Dorsolateral prefrontal cortex (tissue), 120 donors: ENCODE measurements at regions of chr13 and their contacts with region 1.

Region 1: GRCh38 chr13:20713751-20714150 is 10.3 kb downstream of the IL17D start:
- DNase-seq: peak in 3 of 10 donors; percentile 40 to 75 (median 59)
- H3K4me3 ChIP-seq: peak overlapping the region in 34 of 59 donors; percentile 0 to 62 (median 30)
- H3K27ac ChIP-seq: peak overlapping the region in 57 of 59 donors; percentile 8 to 89 (median 75)
- H3K27me3 ChIP-seq: no peaks in the 10 kb centered on the region
- CTCF ChIP-seq: peak in 8 of 56 donors; percentile 7 to 16 (median 10)

Region 2: DNA sequence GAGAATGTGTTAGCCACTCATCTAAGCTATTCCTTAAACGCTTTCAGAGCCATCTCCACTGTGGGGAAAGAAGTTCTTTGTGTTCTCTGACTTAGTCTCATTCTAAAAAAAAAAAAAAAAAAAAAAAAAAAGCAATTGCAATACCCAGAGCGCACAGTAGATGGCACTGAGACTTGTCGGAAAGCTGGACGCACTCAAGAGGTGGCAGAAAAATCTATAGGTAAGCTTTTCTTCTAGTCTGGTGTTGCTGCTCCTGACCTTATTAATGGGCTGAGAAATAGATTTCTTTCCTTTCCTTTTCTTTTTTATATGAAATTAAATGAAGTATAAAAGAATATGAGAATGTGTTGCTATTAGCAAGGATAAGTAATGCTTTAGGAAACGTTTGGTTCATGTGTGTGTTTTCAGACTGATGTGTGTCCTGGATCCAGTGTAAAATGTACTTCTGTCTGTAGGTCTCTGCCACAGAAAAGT is 516.4 kb before region 1 on chr13:
- intact Hi-C with region 1: loop called in 1 of 2 experiments (anchors 10 kb)
- DNase-seq: no peak
- H3K4me3 ChIP-seq: peak overlapping the region in 15 of 59 donors; percentile 4 to 38 (median 16)
- H3K27ac ChIP-seq: no peak overlapping the region
- H3K27me3 ChIP-seq: peaks cover 0 to 48% (median 38%) of the 10 kb centered on the region in 45 donors
- CTCF ChIP-seq: peak; percentile 54 to 86 (median 75)

Region 3: DNA sequence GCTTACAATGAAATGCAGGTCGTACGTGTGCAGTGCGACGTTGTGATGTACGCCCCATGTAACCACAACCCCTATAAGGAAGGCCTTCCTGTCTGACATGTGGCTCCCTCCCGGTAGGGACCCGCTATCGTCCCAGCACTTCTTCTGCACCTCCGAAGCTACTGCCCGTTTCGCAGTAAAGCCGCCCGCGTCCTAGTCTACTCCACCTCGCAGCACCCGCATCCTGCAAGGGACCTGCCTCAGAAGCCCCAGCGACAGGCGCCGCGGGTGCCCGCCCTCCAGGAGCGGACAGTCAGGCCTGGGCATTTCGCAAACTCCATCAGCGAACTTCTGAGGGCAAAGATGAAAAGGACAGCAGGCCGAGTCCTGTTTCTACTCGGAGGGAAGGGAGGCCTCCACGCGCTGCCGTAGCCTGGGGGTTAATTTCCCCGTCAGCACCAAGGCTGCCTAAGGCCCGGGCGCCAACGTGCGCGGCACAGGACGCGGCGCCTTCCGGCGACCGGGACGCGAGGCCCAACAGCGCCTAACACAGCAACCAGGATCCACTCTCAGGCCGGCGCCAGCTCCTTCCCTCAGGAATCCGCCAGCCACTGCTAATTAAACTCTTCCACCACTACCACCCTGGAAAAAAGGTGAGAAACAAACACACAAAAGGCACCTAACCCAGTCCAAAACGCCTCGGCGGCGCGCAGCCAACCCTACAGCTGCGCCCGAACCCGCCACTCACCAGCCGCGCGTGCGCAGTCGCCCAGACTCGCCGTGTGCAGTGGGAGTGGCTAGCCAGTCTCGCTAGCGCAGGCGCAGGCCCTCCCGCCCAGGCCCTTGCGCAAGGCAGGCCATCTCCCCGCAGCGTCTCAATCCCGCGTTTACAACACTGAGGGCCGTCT is 59.7 kb after region 1 on chr13 and contains the start of gene EEF1AKMT1:
- intact Hi-C with region 1: loop called (anchors 2 to 5 kb)
- DNase-seq: peak; percentile 80 to 93 (median 88)
- H3K4me3 ChIP-seq: peak within 1 kb of the TSS; percentile 45 to 92 (median 79)
- H3K27ac ChIP-seq: peak within 1 kb of the TSS; percentile 35 to 95 (median 88)
- H3K27me3 ChIP-seq: no peaks in the 10 kb centered on the region
- CTCF ChIP-seq: peak in 26 of 56 donors; percentile 2 to 49 (median 28)
- total RNA-seq, gene EEF1AKMT1: 6.6 to 19.0 (median 12.2) TPM

Region 4: DNA sequence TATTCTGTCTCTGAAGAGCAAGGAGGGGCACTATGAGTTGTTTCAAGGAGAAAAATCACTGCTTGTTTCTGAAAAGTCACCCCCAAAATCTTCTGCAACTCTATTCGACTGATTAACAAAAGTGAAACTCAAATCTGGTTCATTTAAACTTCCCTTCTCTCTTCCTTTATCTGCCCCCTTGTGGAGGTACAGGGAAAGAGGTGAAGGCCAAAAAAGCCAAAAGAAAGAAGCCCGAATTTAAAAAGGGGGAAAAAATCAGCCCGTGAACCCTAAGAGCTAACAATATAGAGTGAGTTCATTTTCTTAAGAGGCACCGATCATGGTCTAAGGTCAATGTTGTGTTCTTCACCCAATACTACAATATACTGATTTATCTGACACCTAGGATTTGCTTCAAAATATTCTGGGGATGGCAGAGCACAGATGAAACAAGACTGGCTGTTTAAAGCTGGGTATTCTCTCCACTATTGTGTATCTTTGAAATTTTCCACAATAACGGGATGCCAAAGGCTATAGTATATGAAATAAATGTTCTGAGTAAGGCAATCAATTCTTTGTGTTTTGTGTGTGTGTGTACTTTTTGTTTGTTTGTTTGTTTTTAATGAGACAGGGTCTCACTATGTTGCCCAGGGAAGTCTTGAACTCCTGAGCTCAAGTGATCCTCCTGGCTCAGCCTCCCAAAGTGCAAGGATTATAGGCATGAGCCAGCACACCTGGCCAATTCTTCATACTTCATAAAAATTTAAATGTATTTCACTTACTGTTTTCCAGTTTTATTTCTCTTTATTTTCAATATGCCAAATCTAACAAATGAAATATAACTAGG is 115.0 kb after region 1 on chr13:
- intact Hi-C with region 1: loop called (anchors 5 kb)
- DNase-seq: no peak
- H3K4me3 ChIP-seq: peak overlapping the region in 50 of 59 donors; percentile 8 to 59 (median 38)
- H3K27ac ChIP-seq: peak overlapping the region in 34 of 59 donors; percentile 1 to 66 (median 37)
- H3K27me3 ChIP-seq: no peaks in the 10 kb centered on the region
- CTCF ChIP-seq: peak; percentile 68 to 90 (median 83)

Region 5: DNA sequence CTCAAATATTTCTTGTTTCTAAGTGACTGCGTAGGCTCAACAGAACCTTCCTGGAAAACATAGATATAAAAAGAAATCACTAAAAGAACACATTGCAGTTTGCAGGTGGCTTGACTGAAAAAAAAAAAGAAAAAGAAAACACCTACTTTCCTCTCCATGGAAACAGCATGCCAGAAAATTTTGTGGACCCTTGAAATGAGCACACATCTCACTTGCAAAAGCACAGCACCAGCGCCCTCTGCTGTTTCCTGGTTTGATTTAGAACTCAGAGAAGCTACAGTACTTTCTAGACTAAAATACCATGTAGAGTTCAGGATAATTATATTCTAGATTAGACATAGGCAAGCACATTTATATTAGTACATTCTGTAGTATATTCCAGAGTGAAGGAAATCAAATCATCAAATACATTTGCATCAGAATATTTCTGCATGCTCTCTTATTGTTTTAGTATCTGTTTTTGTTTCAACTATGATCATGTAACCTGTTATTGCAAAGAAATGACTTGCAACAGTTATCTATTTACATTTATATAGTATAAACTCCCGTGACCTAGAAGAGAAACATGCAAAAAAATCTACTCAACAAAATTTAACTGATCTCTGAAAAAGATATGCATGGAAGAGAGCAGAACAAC is 211.1 kb after region 1 on chr13:
- intact Hi-C with region 1: loop called in 1 of 2 experiments (anchors 10 kb)
- DNase-seq: peak; percentile 52 to 94 (median 75)
- H3K4me3 ChIP-seq: no peak overlapping the region
- H3K27ac ChIP-seq: peak overlapping the region in 2 of 59 donors; percentile 21 to 55
- H3K27me3 ChIP-seq: no peaks in the 10 kb centered on the region
- CTCF ChIP-seq: peak; percentile 70 to 94 (median 81)